ENCODE measurements at regions of chr4 and their contacts with region 1.

Region 1: DNA sequence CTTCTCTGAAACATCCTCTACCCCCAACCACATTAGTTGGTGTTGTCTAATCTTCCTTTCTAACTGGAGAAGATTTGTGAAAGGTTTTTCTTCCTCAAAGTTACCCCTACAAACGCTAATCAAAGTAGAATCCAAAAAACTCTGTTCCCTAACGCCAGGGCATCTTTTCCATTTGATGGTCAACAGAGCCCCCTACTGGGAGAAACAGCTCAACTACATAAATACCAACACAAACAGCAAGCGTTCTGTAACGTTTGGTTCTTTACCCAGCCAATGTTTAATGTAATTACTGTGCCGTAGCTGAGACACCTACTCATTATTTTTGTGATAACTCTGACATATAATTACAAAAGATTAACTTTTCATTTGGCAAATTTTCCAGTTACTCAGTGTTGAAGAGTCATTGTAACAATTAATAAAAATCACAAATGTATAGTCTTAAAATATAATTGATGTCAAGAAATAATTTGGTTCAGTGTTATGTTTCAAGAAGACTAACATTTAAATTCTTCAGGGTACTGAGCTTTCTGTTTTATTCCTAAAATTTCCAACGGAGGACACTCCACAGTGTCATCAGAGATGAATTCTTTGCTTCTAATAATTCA is 94.9 kb upstream of the TBC1D9 start:
- DNase-seq: peak; percentile 28 to 88
- H3K4me3 ChIP-seq: no peak overlapping the region
- H3K27ac ChIP-seq: no peak overlapping the region
- H3K4me1 ChIP-seq: peaks cover 0 to 3% (median 0%) of the 10 kb centered on the region in 4 donors
- H3K27me3 ChIP-seq: no peaks in the 10 kb centered on the region
- CTCF ChIP-seq: peak in 5 of 7 experiments; percentile 42 to 84 (median 68)
- EP300 ChIP-seq: no peak
- POLR2A ChIP-seq: no peak

Region 2: GRCh38 chr4:140359562-140360427 is 491.3 kb before region 1 on chr4:
- intact Hi-C with region 1: loop called (anchors 10 kb)
- DNase-seq: peak; percentile 85 to 92
- H3K4me3 ChIP-seq: no peak overlapping the region
- H3K27ac ChIP-seq: no peak overlapping the region
- H3K4me1 ChIP-seq: peaks cover 0 to 11% (median 0%) of the 10 kb centered on the region in 4 donors
- H3K27me3 ChIP-seq: no peaks in the 10 kb centered on the region
- CTCF ChIP-seq: peak in 5 of 7 experiments; percentile 68 to 87 (median 78)
- EP300 ChIP-seq: no peak
- POLR2A ChIP-seq: no peak

Region 3: DNA sequence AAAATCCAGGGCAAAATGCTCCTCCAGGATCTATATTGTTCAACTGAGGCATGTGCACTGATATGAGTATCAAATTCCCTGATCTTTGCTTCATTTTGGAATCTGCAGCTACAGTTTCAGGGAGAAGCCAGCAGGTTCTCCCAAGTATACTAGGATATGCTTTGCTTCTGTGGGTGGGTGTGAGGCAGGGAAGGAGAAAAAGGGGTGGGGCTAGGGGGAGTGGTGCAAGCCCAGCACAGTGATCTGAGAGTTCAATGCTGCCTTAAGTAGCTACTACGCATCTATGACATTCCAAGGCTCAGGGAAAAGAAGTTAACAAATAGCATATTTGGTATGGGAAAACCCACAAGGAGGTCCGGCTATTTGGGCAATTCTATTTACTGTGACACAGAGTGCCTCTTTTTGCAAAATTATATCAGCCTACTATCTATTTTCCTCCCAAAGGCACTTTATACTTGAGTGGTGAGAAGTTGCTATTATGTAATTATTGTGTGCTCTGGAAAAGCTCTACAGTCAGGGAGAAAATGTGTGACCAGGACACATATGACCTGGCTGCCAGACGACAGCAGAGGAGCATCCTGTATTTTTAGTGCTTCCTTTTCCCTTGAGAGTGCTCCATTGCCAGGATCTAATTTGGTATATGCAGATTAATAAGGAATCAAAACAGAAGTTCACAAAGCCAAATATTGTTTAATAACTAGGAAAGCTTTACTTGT is 120.1 kb after region 1 on chr4:
- intact Hi-C with region 1: no loop called
- DNase-seq: peak in 1 of 2 donors; percentile 20
- H3K4me3 ChIP-seq: no peak overlapping the region
- H3K27ac ChIP-seq: no peak overlapping the region
- H3K4me1 ChIP-seq: peaks cover 0 to 17% (median 0%) of the 10 kb centered on the region in 4 donors
- H3K27me3 ChIP-seq: no peaks in the 10 kb centered on the region
- CTCF ChIP-seq: no peak
- EP300 ChIP-seq: no peak
- POLR2A ChIP-seq: no peak

Measured in stomach (tissue), 19 donors.